Vagina (tissue), 2 donors: ENCODE measurements at regions of chr17 and their contacts with region 1.

Region 1: GRCh38 chr17:29633886-29634285 is 11.2 kb upstream of the CORO6 start:
- DNase-seq: no peak
- H3K4me3 ChIP-seq: no peak overlapping the region
- H3K27ac ChIP-seq: no peak overlapping the region
- H3K4me1 ChIP-seq: peaks cover 2% of the 10 kb centered on the region
- H3K27me3 ChIP-seq: no peaks in the 10 kb centered on the region
- CTCF ChIP-seq: no peak
- POLR2A ChIP-seq: no peak

Region 2: GRCh38 chr17:29777663-29778062 is 143.8 kb after region 1 on chr17:
- intact Hi-C with region 1: loop called (anchors 5 kb)
- DNase-seq: no peak
- H3K4me3 ChIP-seq: no peak overlapping the region
- H3K27ac ChIP-seq: no peak overlapping the region
- H3K4me1 ChIP-seq: peaks cover 4% of the 10 kb centered on the region
- H3K27me3 ChIP-seq: no peaks in the 10 kb centered on the region
- CTCF ChIP-seq: no peak
- POLR2A ChIP-seq: no peak

Region 3: DNA sequence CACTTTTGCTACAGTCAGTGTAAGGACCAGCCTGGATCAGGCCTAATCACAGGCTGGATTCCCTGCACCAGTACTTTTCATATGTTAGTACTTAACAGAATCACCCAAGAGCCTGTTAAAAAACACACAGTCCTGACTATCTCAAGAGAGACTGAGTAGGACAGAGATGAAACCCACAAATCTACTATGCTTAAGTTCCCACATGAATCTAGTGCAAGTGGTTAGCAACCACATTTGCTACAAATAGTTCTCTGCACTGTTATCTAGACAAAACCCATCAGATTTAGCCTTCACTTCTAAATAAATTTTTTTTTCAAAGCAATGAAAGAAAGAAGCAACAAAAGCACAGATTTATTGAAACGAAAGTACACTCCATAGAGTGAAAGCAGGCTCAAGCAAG is 257.2 kb after region 1 on chr17:
- intact Hi-C with region 1: no loop called
- DNase-seq: no peak
- H3K4me3 ChIP-seq: no peak overlapping the region
- H3K27ac ChIP-seq: no peak overlapping the region
- H3K4me1 ChIP-seq: no peaks in the 10 kb centered on the region
- H3K27me3 ChIP-seq: no peaks in the 10 kb centered on the region
- CTCF ChIP-seq: no peak
- POLR2A ChIP-seq: no peak